Heart left ventricle (tissue), 16 donors: ENCODE measurements at regions of chr12 and their contacts with region 1.

Region 1: DNA sequence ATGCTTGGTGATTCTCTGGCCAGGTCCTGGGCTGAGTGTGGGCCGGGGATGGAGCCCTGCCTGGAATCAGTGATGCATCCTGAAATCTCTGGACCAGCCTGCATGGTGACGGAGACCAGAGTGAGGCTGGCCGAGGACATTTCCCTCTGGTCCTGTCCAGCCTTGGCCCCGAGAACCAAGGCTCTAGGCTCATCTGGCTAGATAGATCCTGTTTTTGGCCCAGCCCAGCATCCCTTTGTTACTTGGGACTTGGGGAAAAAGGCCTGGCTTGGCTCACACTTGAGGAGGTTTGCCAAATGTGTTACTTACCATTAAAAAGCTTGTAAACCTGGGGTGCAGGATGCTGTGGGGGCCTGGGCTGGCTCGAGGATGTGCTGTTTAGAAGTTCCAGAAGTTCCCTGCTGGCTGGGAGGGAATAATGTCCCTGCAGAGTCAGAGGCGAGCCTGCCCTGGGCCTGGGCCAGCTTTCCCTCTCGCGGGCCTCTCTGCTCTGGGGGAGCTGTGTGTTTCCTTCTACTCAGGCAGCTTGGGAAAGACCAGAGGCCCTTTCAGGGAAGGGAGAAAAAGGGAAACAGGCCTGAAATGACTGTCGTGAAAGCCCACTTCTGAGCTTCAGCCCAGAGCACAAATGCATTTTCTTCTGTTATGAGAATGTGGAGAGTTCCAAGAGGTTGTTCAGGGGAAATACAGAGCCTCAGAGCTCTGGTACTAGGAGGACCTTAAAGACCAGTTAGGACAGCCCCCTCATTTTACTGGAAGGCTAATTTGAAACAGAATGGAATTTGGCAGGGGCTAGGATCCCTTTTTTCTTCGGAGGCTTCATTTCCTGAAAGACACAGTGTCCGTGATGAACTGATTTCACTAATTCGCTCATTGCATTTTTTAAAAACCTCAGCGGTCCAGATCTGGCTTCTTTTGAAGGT is 47.2 kb upstream of the CTDSP2 start:
- DNase-seq: peak; percentile 92 to 96 (median 94)
- ATAC-seq: peak; percentile 72 to 77 (median 74)
- H3K4me3 ChIP-seq: peak overlapping the region in 7 of 12 donors; percentile 0 to 35 (median 19)
- H3K27ac ChIP-seq: peak overlapping the region; percentile 96 to 99 (median 98)
- H3K4me1 ChIP-seq: peaks cover 17 to 99% (median 86%) of the 10 kb centered on the region in 12 donors
- H3K27me3 ChIP-seq: no peaks in the 10 kb centered on the region
- CTCF ChIP-seq: peak in 4 of 12 donors; percentile 11 to 40 (median 27)
- POLR2A ChIP-seq: peak in 1 of 2 donors; percentile 7

Region 2: GRCh38 chr12:57836442-57837375 is 57.0 kb before region 1 on chr12:
- intact Hi-C with region 1: loop called (anchors 1 to 5 kb)
- DNase-seq: peak; percentile 87 to 91 (median 90)
- ATAC-seq: peak; percentile 37 to 76 (median 52)
- H3K4me3 ChIP-seq: peak overlapping the region in 10 of 12 donors; percentile 6 to 49 (median 26)
- H3K27ac ChIP-seq: peak overlapping the region in 11 of 12 donors; percentile 51 to 100 (median 70)
- H3K4me1 ChIP-seq: peaks cover 65 to 100% (median 100%) of the 10 kb centered on the region in 12 donors
- H3K27me3 ChIP-seq: no peaks in the 10 kb centered on the region
- CTCF ChIP-seq: no peak
- POLR2A ChIP-seq: no peak